ENCODE measurements at regions of chr5 and their contacts with region 1.

Region 1: GRCh38 chr5:123511648-123512605 is at the start of gene CSNK1G3:
- DNase-seq: peak; percentile 98
- total RNA-seq, gene CSNK1G3: 28.0 TPM

Region 2: DNA sequence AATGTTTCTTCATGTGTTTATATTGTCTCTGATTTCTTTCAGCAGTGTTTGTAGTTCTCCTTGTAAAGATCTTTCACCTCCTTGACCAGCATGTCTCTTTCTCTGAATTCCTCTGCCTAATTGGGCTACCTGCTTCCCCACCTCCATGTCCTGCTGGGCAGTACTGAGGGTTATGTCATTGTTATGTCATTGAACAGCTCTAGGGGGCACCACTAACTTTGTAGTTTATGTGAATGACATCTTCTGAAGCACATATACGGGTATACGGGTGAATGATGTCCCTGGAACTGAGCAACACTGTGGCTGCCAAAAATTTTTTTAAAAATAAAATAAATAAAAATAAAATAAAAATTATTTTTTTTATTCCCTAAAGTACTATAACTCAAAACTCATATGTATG is 1216.8 kb before region 1 on chr5:
- intact Hi-C with region 1: no loop called
- DNase-seq: no peak

Region 3: GRCh38 chr5:123423278-123424149 is 88.4 kb before region 1 on chr5 and contains the start of gene CEP120:
- intact Hi-C with region 1: loop called (anchors 2 kb)
- DNase-seq: peak; percentile 99
- total RNA-seq, gene CEP120: 10.2 TPM

Region 4: DNA sequence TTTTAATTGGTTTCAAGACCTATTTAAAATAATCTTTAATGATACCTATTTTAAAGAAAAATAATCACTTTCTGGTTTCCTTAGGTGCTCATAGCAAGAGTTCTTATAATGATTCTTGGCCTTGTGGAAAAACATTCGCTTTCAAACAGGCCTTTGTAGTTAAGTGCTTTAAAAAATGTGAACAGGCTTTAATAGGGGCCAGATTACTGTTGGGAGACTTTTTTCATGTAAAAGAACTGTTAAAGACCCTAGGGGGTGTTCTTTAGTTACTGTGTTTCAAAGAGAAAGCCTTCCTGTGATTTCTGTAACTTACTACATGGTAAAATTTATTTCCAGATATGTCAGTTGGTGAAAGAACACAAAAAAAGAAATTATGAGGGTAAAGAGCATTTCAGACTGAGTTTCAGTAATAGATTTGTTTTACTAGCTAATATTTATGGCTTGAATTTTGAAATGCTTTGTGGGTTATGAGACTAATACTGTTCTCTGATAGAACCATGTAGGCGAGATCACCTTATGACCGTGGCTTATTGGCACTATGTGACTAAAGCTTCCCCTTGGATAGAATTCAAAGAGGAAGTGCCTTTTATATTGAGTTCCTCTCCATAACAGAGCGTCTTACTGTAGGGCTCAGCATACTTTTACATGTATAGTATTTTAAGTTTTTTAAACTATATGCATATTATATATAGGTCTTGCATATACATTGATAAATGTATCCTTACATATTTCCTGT is 70.8 kb after region 1 on chr5:
- intact Hi-C with region 1: loop called (anchors 10 kb)
- DNase-seq: no peak

Region 5: GRCh38 chr5:123610665-123611405 is 98.9 kb after region 1 on chr5:
- intact Hi-C with region 1: loop called (anchors 5 kb)
- DNase-seq: no peak